Psoas muscle (tissue), 8 donors: ENCODE measurements at regions of chr12 and their contacts with region 1.

Region 1: DNA sequence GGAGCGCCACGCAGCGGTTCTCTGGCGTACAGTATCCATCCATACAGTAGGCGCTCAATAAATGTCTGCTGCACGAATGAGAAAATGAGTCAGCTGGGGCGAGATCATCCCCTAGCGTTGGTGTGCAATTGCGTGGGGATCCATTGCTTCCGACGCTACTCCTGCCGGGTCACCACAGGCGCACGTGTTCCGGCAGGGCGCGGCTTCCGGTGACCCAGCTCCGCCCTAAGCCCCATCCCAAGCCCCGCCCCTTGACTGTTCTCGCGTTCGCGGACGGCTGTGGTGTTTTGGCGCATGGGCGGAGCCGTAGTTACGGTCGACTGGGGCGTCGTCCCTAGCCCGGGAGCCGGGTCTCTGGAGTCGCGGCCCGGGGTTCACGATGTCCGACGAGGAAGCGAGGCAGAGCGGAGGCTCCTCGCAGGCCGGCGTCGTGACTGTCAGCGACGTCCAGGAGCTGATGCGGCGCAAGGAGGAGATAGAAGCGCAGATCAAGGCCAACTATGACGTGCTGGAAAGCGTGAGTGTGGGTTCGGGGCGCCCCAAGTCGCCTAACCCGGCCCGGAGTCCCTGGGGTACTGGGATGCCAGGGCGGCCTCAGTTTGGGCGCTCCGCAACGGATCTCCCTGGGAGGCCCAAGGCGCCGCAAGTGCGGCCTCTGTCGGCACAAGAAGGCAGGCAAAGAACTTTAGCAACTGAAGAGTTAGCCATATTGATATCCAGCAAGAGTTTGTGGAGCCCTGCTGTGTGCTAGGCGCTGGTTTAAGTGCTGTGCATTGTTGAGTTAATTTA is at the start of gene PSMD9:
- DNase-seq: peak; percentile 98 to 99
- ATAC-seq: peak; percentile 98 to 100 (median 98)
- H3K4me3 ChIP-seq: peak within 1 kb of the TSS; percentile 72
- H3K27ac ChIP-seq: peak within 1 kb of the TSS; percentile 88
- H3K4me1 ChIP-seq: peaks cover 21% of the 10 kb centered on the region
- H3K27me3 ChIP-seq: no peaks in the 10 kb centered on the region
- CTCF ChIP-seq: peak; percentile 65
- total RNA-seq, gene PSMD9: 20.1 to 34.0 (median 25.5) TPM

Region 2: GRCh38 chr12:121579981-121580868 is 308.4 kb before region 1 on chr12:
- intact Hi-C with region 1: no loop called
- DNase-seq: peak; percentile 74 to 86
- ATAC-seq: peak; percentile 52 to 75 (median 68)
- H3K4me3 ChIP-seq: peak overlapping the region; percentile 82
- H3K27ac ChIP-seq: peak overlapping the region; percentile 93
- H3K4me1 ChIP-seq: peaks cover 32% of the 10 kb centered on the region
- H3K27me3 ChIP-seq: no peaks in the 10 kb centered on the region
- CTCF ChIP-seq: no peak

Region 3: GRCh38 chr12:121697098-121697698 is 191.5 kb before region 1 on chr12:
- intact Hi-C with region 1: loop called (anchors 5 to 10 kb)
- DNase-seq: no peak
- ATAC-seq: peak in 3 of 4 donors; percentile 19 to 54 (median 30)
- H3K4me3 ChIP-seq: no peak overlapping the region
- H3K27ac ChIP-seq: no peak overlapping the region
- H3K4me1 ChIP-seq: peaks cover 8% of the 10 kb centered on the region
- H3K27me3 ChIP-seq: no peaks in the 10 kb centered on the region
- CTCF ChIP-seq: peak; percentile 70

Region 4: DNA sequence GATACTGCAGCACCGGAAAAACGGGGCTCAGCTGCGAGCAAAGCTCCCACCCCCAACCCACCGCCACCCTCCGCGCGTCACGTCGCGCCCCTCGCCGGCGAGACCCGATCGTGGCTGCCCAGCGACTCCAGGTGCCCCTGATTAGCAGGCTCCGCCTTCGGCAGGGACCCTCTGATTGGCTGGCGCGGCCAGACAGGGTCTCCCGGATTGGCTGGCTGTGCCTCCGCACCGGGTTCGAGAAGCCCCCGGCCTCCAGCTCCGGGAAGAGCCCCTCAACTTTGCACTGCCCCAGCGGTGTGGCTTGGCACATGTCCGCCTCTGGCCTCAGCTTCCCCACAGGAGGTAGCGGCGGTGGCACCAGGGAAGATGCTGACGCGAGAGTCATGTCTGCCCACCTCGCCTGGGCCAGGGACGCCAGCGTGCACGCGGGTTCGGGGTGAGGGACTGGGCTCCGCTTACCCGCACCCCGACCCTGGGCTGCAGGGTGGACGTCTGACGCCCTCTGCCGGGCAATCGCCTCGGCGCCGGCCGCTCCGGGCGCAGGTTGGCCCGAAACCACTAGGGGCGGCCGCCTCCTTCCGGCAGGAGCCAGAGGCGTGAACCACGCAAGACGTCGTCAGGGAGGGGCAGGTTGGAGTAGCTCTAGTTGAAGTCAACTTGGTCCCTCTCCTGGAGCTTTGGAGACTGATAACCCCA is 94.7 kb before region 1 on chr12:
- intact Hi-C with region 1: loop called (anchors 5 kb)
- DNase-seq: peak; percentile 91 to 96
- ATAC-seq: peak; percentile 61 to 72 (median 64)
- H3K4me3 ChIP-seq: peak overlapping the region; percentile 86
- H3K27ac ChIP-seq: peak overlapping the region; percentile 100
- H3K4me1 ChIP-seq: peaks cover 50% of the 10 kb centered on the region
- H3K27me3 ChIP-seq: no peaks in the 10 kb centered on the region
- CTCF ChIP-seq: peak; percentile 99

Region 5: DNA sequence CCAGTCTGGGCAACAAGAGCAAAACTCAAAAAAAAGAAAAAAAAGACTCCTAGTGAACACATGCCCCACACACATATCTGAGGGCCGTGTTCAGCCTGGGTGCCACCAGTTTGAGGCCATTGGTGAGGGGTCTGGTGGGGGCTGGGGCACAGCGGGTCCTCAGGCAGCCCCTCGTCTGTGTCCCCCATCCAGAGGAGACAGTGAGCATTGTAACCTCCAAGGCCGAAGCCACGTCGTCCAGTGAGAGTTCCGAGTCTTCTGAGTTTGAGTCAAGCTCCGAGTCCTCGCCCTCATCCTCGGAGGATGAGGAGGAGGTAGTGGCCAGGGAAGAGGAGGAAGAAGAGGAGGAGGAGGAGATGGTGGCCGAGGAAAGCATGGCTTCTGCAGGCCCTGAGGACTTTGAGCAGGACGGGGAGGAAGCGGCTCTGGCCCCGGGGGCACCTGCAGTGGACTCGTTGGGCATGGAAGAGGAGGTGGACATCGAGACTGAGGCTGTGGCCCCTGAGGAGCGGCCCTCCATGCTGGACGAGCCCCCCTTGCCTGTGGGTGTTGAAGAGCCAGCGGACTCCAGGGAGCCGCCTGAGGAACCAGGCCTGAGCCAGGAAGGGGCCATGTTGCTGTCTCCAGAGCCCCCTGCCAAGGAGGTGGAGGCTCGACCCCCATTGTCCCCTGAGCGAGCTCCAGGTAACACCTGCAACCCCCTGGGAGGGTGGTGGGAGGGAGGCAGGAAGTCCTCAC is 69.3 kb before region 1 on chr12:
- intact Hi-C with region 1: loop called in 1 of 2 experiments (anchors 2 kb)
- DNase-seq: no peak
- ATAC-seq: no peak
- H3K4me3 ChIP-seq: no peak overlapping the region
- H3K27ac ChIP-seq: no peak overlapping the region
- H3K4me1 ChIP-seq: no peaks in the 10 kb centered on the region
- H3K27me3 ChIP-seq: no peaks in the 10 kb centered on the region
- CTCF ChIP-seq: no peak

Region 6: GRCh38 chr12:121839993-121840761 is 48.5 kb before region 1 on chr12:
- intact Hi-C with region 1: loop called (anchors 5 kb)
- DNase-seq: no peak
- ATAC-seq: peak in 1 of 4 donors; percentile 2
- H3K4me3 ChIP-seq: peak overlapping the region; percentile 74
- H3K27ac ChIP-seq: peak overlapping the region; percentile 67
- H3K4me1 ChIP-seq: no peaks in the 10 kb centered on the region
- H3K27me3 ChIP-seq: no peaks in the 10 kb centered on the region
- CTCF ChIP-seq: no peak

Region 7: DNA sequence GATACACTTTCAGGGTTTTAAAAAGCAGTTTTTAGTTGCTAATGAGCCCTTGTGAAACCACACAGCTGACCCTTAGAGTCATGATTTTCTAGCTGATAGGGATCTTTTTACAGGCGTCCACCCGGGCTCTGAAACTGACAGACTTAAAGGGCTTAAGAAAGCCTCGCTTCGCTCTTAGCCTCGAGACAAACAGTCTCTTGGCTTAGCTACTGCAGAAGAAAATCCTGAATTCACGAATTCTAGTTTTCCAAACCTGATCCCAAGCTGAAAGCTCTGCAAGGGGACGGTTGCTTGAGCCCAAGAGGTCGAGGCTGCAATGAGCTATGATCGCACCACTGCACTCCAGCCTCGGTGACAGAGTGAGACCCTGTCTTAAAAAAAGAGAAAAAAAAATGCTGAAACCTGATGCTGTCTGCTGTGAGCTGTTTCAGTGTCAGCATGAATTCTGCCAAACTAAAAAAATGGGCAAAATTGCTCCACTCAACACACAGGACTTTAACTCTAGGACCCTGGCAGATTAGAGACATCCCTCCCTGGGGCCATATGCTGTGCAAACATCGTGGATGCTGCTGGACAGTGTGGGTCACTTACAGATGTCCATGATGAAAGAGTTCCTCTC is 26.9 kb before region 1 on chr12:
- intact Hi-C with region 1: loop called in 1 of 2 experiments (anchors 2 kb)
- DNase-seq: no peak
- ATAC-seq: no peak
- H3K4me3 ChIP-seq: no peak overlapping the region
- H3K27ac ChIP-seq: peak overlapping the region; percentile 61
- H3K4me1 ChIP-seq: peaks cover 40% of the 10 kb centered on the region
- H3K27me3 ChIP-seq: no peaks in the 10 kb centered on the region
- CTCF ChIP-seq: no peak

Region 8: GRCh38 chr12:121903202-121903601 is 14.5 kb after region 1 on chr12:
- intact Hi-C with region 1: no loop called
- DNase-seq: no peak
- ATAC-seq: peak in 1 of 4 donors; percentile 40
- H3K4me3 ChIP-seq: no peak overlapping the region
- H3K27ac ChIP-seq: no peak overlapping the region
- H3K4me1 ChIP-seq: no peaks in the 10 kb centered on the region
- H3K27me3 ChIP-seq: no peaks in the 10 kb centered on the region
- CTCF ChIP-seq: no peak

Region 9: DNA sequence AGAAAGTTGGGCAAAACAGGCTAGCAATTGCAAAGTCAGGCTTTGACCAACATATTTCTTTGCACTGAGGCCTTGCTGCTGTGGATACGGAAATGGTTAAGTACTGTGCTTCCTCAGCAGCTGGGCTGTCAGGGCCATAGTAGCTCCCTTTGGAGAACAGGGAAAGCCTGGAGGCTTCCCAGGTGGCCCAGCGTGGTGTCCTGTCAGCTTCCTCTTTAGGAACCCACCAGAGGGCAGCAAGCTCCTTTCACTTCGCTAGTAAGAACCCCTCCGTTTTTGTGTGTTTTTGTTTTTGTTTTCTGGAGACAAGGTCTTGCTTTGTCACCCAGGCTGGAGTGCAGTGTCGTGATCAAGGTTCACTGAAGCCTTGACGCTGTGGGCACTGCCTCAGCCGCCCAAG is 28.0 kb after region 1 on chr12:
- intact Hi-C with region 1: no loop called
- DNase-seq: no peak
- ATAC-seq: peak in 1 of 4 donors; percentile 45
- H3K4me3 ChIP-seq: no peak overlapping the region
- H3K27ac ChIP-seq: no peak overlapping the region
- H3K4me1 ChIP-seq: peaks cover 3% of the 10 kb centered on the region
- H3K27me3 ChIP-seq: no peaks in the 10 kb centered on the region
- CTCF ChIP-seq: no peak